ENCODE measurements at regions of chr5 and their contacts with region 1.

Region 1: DNA sequence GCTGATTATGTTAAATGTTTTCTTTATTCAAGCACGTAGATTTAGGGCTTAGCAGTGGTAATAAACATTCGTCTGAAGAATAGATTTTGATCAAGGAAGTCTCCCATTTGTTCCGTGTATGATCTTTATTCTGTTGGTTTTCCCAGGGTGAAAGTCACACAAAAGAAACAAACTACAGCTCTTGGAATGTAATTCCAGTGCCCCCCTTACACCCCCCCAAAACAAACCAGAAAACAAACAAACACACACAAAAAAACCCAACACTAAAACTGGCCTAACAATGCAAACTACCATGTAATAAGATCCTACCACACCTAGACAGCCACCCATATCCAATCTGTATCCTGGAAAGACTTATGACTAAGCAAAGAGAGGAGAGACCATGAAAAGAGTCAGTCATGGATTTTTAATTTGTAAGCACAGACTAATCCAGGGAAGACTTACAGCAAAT is 196.2 kb upstream of the ELL2 start:
- DNase-seq: peak; percentile 58
- H3K4me3 ChIP-seq: no peak overlapping the region
- H3K27ac ChIP-seq: peak overlapping the region; percentile 90
- H3K4me1 ChIP-seq: peaks cover 35% of the 10 kb centered on the region
- H3K27me3 ChIP-seq: no peaks in the 10 kb centered on the region
- CTCF ChIP-seq: no peak

Region 2: DNA sequence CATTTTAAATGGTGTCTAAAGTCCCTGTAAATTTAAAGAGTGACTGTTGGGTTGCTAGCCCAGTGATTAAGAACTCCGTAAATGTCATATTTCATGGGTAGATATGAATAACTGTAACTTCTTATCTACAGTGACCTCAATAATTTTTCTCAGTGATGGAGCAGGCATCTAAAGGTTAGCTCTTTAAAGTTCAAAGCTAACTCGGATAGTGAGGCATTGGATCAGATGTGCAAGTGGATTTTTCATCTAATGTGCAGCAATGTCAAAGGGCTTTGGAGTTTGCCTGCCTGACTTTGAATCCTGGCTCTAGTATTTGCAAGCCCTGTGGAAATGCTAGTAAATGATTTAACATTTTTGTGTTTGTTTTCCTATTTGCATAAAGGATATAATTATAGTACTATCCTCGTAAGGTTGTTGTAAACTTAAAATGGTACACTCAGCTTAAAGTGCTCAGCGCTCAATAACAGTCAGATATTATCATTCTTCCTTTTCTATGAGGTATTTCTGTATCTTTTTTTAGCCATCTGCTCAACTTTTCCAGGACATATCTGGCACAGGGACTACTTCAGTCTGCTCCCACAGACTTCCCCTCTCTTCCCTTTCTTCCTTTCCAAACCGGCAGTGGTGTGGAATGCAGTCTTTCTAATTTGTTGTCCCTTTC is 32.5 kb before region 1 on chr5:
- CTCF ChIA-PET with region 1: no interaction called
- dilution Hi-C with region 1: no loop called
- in situ Hi-C with region 1: no loop called
- intact Hi-C with region 1: loop called (anchors 5 kb)
- DNase-seq: no peak
- H3K4me3 ChIP-seq: no peak overlapping the region
- H3K27ac ChIP-seq: peak overlapping the region; percentile 15
- H3K4me1 ChIP-seq: peaks cover 32% of the 10 kb centered on the region
- H3K27me3 ChIP-seq: no peaks in the 10 kb centered on the region
- CTCF ChIP-seq: no peak

Region 3: GRCh38 chr5:96483878-96484277 is 326.0 kb after region 1 on chr5:
- CTCF ChIA-PET with region 1: no interaction called
- dilution Hi-C with region 1: no loop called
- in situ Hi-C with region 1: no loop called
- intact Hi-C with region 1: no loop called
- DNase-seq: peak; percentile 41
- H3K4me3 ChIP-seq: no peak overlapping the region
- H3K27ac ChIP-seq: no peak overlapping the region
- H3K4me1 ChIP-seq: no peaks in the 10 kb centered on the region
- H3K27me3 ChIP-seq: peaks cover 3% of the 10 kb centered on the region
- CTCF ChIP-seq: no peak